H1 (cell line): ENCODE measurements at regions of chrX and their contacts with region 1.

Region 1: GRCh38 chrX:152941328-152942106 is 43.6 kb downstream of the ZNF185 start:
- DNase-seq: peak; percentile 75 to 93
- H3K4me3 ChIP-seq: peak overlapping the region; percentile 36 to 68 (median 52)
- H3K27ac ChIP-seq: no peak overlapping the region; the same call in 1 of the 2 replicates
- H3K4me1 ChIP-seq: peaks cover 0 to 4% (median 0%) of the 10 kb centered on the region in 4 experiments; a peak in 2 of 7 replicates
- H3K27me3 ChIP-seq: no peaks in the 10 kb centered on the region
- CTCF ChIP-seq: peak; percentile 57 to 73 (median 62)
- EP300 ChIP-seq: peak in 1 of 2 experiments; percentile 55; a peak in 1 of 3 replicates
- POLR2A ChIP-seq: no peak
- RAD21 ChIP-seq: peak; percentile 74 to 77

Region 2: DNA sequence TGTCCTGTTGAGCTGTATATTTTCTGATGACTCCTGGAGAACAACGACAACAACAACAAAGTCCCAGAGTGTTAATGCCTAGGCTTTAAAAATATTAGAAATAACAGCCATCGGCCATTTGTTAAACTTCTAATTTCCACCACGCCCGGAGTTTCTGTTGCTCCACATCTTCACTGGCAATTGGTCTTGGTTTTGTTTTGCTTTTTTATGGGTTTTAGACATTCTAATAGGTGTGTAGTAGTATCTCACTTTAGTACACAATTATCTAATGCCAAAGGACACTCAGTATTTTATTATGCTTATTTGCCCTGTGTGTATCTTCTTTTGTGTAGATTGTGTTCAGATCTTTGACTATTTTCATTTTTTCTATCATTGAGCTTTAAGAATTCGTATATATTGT is 203.0 kb before region 1 on chrX:
- CTCF ChIA-PET with region 1: no interaction called
- POLR2A ChIA-PET with region 1: no interaction called
- DNase-seq: no peak
- H3K4me3 ChIP-seq: no peak overlapping the region
- H3K27ac ChIP-seq: no peak overlapping the region
- H3K4me1 ChIP-seq: no peaks in the 10 kb centered on the region
- H3K27me3 ChIP-seq: no peaks in the 10 kb centered on the region
- CTCF ChIP-seq: no peak
- EP300 ChIP-seq: no peak
- POLR2A ChIP-seq: no peak
- RAD21 ChIP-seq: no peak

Region 3: DNA sequence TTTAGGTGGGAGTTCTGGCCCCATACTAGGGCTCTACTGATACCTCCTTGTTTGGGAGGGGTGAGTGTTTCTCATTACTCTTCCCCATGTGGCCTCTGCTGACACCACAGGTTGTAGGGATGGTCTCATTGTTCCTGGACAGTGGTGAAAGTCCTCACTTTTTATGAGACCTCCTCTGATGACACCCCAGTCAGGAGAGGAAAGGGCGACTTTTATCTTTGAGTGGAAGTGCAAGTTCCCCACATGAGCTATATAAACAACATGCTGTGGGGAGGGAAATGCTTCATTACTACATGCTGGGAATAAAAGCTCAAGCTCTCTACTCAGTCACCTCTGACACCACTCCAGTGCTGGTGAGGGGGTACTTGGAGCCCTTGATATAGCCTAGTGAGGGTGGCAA is 142.6 kb before region 1 on chrX:
- CTCF ChIA-PET with region 1: no interaction called
- POLR2A ChIA-PET with region 1: no interaction called
- DNase-seq: no peak
- H3K4me3 ChIP-seq: no peak overlapping the region
- H3K27ac ChIP-seq: no peak overlapping the region
- H3K4me1 ChIP-seq: no peaks in the 10 kb centered on the region
- H3K27me3 ChIP-seq: no peaks in the 10 kb centered on the region
- CTCF ChIP-seq: no peak
- EP300 ChIP-seq: no peak
- POLR2A ChIP-seq: no peak
- RAD21 ChIP-seq: no peak

Region 4: GRCh38 chrX:152958524-152959465 is 17.3 kb after region 1 on chrX:
- CTCF ChIA-PET with region 1: interaction called, 10 read pairs
- POLR2A ChIA-PET with region 1: interaction called, 3 read pairs
- DNase-seq: peak; percentile 50 to 95
- H3K4me3 ChIP-seq: peak overlapping the region in 2 of 4 experiments; percentile 1 to 51; a peak in 4 of 8 replicates
- H3K27ac ChIP-seq: no peak overlapping the region
- H3K4me1 ChIP-seq: peaks cover 0 to 3% (median 0%) of the 10 kb centered on the region in 4 experiments; a peak in 1 of 7 replicates
- H3K27me3 ChIP-seq: no peaks in the 10 kb centered on the region
- CTCF ChIP-seq: peak; percentile 50 to 77 (median 70)
- EP300 ChIP-seq: no peak
- POLR2A ChIP-seq: no peak; a peak in 1 of 3 replicates
- RAD21 ChIP-seq: peak; percentile 88

Region 5: DNA sequence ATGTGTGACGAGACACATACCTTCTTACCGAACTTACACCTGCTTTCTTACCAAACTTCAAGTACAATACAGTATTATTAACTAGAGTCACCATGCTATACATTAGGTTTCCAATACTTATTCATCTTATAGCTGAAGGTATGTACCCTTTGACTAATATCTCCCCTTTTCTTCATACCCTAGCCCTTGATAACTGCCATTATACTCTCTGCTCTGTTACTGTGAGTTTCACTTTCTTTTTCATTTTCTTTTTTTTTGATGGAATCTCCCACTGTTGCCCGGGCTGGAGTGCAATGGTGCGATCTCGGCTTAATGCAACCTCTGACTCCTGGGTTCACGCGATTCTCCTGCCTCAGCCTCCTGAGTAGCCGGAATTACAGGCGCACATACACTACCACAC is 55.8 kb after region 1 on chrX:
- CTCF ChIA-PET with region 1: no interaction called
- POLR2A ChIA-PET with region 1: no interaction called
- DNase-seq: no peak
- H3K4me3 ChIP-seq: no peak overlapping the region
- H3K27ac ChIP-seq: no peak overlapping the region
- H3K4me1 ChIP-seq: peaks cover 0 to 3% (median 0%) of the 10 kb centered on the region in 4 experiments; a peak in 1 of 7 replicates
- H3K27me3 ChIP-seq: no peaks in the 10 kb centered on the region
- CTCF ChIP-seq: no peak
- EP300 ChIP-seq: no peak
- POLR2A ChIP-seq: no peak
- RAD21 ChIP-seq: no peak